ENCODE measurements at regions of chr18 and their contacts with region 1.

Region 1: DNA sequence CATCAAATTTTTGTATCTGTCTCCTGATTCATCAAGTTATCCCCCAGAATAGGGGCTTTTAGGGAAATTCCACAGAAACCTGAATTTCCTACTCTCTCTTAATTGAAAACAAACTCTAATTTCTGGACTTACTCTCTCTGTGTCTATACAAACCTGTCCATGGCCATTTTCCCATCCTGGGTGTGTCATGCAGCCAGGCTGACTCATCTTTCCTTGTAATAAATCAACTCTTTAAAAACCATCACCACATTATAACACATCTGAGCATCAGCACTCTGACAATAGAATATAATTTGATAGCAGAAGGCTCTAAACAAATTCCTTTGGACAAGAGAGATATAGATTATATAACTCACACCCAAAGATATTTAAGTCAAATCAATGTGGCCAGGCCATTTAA is 610.2 kb downstream of the DCC start:
- DNase-seq: no peak
- ATAC-seq: no peak

Region 2: GRCh38 chr18:53040286-53040685 is 90.1 kb after region 1 on chr18:
- intact Hi-C with region 1: no loop called
- DNase-seq: no peak
- ATAC-seq: no peak

Region 3: GRCh38 chr18:54080858-54081257 is 1130.7 kb after region 1 on chr18:
- intact Hi-C with region 1: loop called (anchors 5 kb)
- DNase-seq: no peak
- ATAC-seq: no peak

Measured in sciatic nerve (tissue), 2 donors.